ENCODE measurements at regions of chr6 and their contacts with region 1.

Region 1: DNA sequence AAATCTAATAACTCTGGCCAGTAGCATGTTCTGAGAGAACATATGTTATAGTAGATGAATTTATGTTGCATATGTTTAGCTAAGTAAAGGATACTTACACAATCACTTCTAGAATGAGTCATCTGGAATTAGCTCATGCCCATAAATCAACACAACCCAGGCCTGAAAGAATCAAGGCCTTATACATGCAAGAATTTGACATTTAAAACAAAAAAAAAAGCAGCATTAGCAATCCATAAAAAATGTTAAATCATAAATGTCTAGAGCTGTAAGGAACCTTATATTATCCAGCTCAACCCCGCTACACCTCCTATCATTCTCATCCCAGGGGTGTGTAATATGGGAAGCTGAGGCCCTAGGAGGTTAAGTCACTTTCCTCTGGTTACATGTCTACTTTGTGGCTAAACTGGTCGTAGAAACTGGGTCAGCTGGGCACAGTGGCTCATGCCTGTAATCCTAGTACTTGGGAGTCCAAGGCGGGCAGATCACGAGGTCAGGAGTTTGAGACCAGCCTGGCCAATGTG is 105.2 kb upstream of the CARMIL1 start:
- DNase-seq: peak; percentile 70 to 88 (median 85)
- H3K4me3 ChIP-seq: no peak overlapping the region
- H3K4me3 Mint-ChIP-seq: no peak overlapping the region
- H3K27ac ChIP-seq: peak overlapping the region; percentile 78 to 84
- H3K27ac Mint-ChIP-seq: peak overlapping the region; percentile 86 to 97 (median 94)
- H3K4me1 ChIP-seq: peaks cover 72 to 88% of the 10 kb centered on the region in 2 donors
- H3K4me1 Mint-ChIP-seq: peaks cover 88% of the 10 kb centered on the region
- H3K27me3 ChIP-seq: no peaks in the 10 kb centered on the region
- H3K27me3 Mint-ChIP-seq: peaks cover 0 to 3% (median 2%) of the 10 kb centered on the region in 3 donors
- CTCF ChIP-seq: no peak

Region 2: GRCh38 chr6:25122001-25122400 is 52.0 kb before region 1 on chr6:
- intact Hi-C with region 1: loop called in 1 of 2 experiments (anchors 10 kb)
- DNase-seq: no peak
- H3K4me3 ChIP-seq: no peak overlapping the region
- H3K4me3 Mint-ChIP-seq: no peak overlapping the region
- H3K27ac ChIP-seq: no peak overlapping the region
- H3K27ac Mint-ChIP-seq: no peak overlapping the region
- H3K4me1 ChIP-seq: peaks cover 20 to 24% of the 10 kb centered on the region in 2 donors
- H3K4me1 Mint-ChIP-seq: peaks cover 38% of the 10 kb centered on the region
- H3K27me3 ChIP-seq: no peaks in the 10 kb centered on the region
- H3K27me3 Mint-ChIP-seq: no peaks in the 10 kb centered on the region
- CTCF ChIP-seq: no peak

Region 3: DNA sequence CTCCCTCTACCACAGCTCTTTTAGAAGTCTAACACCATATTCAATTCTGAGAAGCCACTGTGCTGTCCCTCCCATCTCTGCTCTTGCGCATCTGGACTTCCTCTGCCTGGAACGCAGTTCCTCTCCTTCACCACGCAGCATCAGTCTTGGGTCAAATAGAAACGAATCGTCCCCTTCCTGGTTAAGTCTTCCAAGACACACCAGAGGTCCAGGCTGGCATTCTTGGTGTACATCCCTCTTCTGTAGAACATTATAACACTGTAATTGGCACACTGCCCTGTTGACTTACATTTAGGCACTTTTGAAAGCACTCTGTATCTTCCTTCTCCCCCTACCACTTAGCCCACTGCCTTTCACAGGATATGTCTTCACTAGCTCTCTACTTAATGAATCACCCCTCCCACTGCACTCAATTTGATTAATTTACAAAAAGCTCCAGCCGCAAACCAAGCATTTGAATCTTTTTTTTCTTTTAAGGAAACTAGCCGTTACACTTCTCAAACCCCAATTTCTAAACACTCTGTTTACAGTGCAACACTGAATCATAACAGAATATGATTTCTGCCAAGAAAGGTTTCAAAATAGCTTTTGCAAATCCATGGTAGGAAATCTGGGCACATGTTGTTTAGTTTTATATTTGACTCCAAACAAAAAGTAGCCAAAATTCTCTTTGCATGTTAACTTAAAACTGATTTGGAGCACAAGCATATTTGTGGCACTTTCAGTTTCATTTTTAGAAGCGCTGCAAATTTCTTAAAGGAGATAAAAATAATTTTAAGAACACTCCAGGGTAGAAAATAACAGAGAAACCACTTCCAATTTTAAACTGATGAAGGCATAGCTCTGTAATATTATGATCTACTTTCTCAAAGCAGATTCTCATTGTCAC is 35.5 kb before region 1 on chr6:
- intact Hi-C with region 1: loop called in 1 of 2 experiments (anchors 5 kb)
- DNase-seq: peak in 2 of 3 donors; percentile 72 to 74
- H3K4me3 ChIP-seq: peak overlapping the region; percentile 73 to 99 (median 83)
- H3K4me3 Mint-ChIP-seq: peak overlapping the region; percentile 78 to 95
- H3K27ac ChIP-seq: peak overlapping the region; percentile 94 to 99
- H3K27ac Mint-ChIP-seq: peak overlapping the region; percentile 95 to 99 (median 98)
- H3K4me1 ChIP-seq: peaks cover 22 to 27% of the 10 kb centered on the region in 2 donors
- H3K4me1 Mint-ChIP-seq: peaks cover 40% of the 10 kb centered on the region
- H3K27me3 ChIP-seq: no peaks in the 10 kb centered on the region
- H3K27me3 Mint-ChIP-seq: no peaks in the 10 kb centered on the region
- CTCF ChIP-seq: no peak

Region 4: GRCh38 chr6:25202505-25202904 is 28.5 kb after region 1 on chr6:
- intact Hi-C with region 1: no loop called
- DNase-seq: no peak
- H3K4me3 ChIP-seq: no peak overlapping the region
- H3K4me3 Mint-ChIP-seq: no peak overlapping the region
- H3K27ac ChIP-seq: no peak overlapping the region
- H3K27ac Mint-ChIP-seq: no peak overlapping the region
- H3K4me1 ChIP-seq: no peaks in the 10 kb centered on the region
- H3K4me1 Mint-ChIP-seq: no peaks in the 10 kb centered on the region
- H3K27me3 ChIP-seq: no peaks in the 10 kb centered on the region
- H3K27me3 Mint-ChIP-seq: peaks cover 2% of the 10 kb centered on the region in 3 donors
- CTCF ChIP-seq: no peak

Measured in CD14-positive monocyte (primary cell).